Endothelial cell of umbilical vein (primary cell): ENCODE measurements at regions of chr19 and their contacts with region 1.

Region 1: DNA sequence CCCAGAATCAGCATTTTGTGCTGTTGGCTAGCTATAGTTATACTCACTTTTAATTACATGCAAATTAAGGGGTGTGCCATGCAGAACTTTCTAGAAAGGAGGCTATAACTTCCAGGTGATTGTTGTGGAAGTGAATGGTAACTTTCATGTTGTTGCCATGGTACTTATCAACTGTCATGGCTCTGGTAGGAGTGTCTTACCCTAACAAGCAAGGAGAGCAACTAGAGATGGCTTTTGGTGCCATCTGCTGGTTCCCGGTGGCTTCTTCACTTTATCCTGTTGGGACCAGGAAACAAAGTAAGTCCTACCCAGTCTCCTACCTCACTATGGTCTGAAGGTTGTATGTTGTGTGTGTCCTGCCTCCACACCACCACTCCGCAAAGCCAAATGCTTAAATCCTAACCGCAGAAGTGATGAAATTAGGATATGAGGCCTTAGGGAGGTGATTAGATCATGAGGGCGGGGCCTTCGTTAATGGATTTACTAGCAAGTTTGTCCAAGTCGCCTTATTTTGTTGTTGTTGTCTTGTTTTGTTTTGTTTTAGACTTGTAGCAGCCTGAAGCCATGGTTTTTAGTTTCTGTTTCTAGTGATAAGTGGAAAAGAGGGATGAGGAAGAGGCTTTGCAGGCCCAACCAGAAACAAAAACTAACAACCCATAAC is 22.6 kb downstream of the FBXL12 start:
- DNase-seq: peak; percentile 94
- H3K4me3 ChIP-seq: no peak overlapping the region
- H3K27ac ChIP-seq: no peak overlapping the region
- H3K4me1 ChIP-seq: no peaks in the 10 kb centered on the region
- H3K27me3 ChIP-seq: no peaks in the 10 kb centered on the region
- CTCF ChIP-seq: peak; percentile 79 to 83
- POLR2A ChIP-seq: no peak

Region 2: DNA sequence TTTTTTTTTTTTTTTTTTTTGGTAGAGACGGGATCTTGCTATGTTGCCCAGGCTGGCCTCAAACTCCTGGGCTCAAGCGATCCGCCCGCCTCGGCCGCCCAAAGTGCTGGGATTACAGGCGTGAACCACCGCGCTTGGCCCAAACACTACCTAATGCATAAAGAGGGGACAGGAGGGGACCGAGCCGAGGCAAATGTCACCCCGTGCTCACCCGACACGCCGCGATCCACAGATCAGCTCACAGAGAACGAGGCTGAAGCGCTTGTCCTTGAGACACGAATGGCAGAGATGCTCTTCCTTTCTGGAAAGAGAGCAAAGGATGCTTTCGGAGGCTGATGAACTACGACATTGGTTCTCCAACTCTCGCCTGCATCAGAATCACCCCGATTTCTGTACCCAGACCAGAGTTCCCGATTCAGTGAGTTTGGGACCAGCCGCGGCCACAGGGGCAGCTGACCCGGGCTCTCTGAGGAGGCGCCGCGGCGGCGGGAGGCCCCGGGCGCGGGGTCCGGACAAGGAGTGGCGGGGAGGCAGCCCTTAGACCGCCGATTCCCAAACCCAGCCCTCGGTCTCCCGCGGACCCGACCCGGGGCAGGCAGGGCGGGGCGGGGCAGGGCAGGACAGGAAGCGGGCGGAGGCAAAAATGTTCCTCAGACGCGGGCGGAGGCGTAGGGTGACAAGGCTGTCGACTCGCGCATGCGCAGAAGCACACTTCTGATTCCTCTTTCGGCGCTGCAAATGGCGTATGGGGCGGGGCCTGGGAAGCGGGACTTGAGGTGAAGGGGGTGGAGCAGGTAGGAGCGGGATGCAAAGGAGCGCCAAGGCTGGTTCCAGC is 486.9 kb before region 1 on chr19 and contains the start of gene ZNF699:
- CTCF ChIA-PET with region 1: interaction called, 9 read pairs
- POLR2A ChIA-PET with region 1: no interaction called
- dilution Hi-C with region 1: no loop called
- intact Hi-C with region 1: loop called (anchors 2 kb)
- DNase-seq: peak; percentile 98
- H3K4me3 ChIP-seq: peak within 1 kb of the TSS; percentile 52 to 88 (median 67)
- H3K27ac ChIP-seq: peak within 1 kb of the TSS; percentile 55
- H3K4me1 ChIP-seq: peaks cover 7% of the 10 kb centered on the region
- H3K27me3 ChIP-seq: no peaks in the 10 kb centered on the region
- CTCF ChIP-seq: no peak
- POLR2A ChIP-seq: no peak
- total RNA-seq, gene ZNF699: 3.9 and 4.7 TPM in 2 replicates

Region 3: GRCh38 chr19:9584073-9584833 is 212.0 kb before region 1 on chr19 and contains the start of gene ZNF121:
- CTCF ChIA-PET with region 1: interaction called, 10 read pairs
- POLR2A ChIA-PET with region 1: no interaction called
- dilution Hi-C with region 1: no loop called
- intact Hi-C with region 1: loop called (anchors 1 kb)
- DNase-seq: peak; percentile 82
- H3K4me3 ChIP-seq: peak within 1 kb of the TSS; percentile 72 to 97 (median 90)
- H3K27ac ChIP-seq: peak within 1 kb of the TSS; percentile 82
- H3K4me1 ChIP-seq: no peaks in the 10 kb centered on the region
- H3K27me3 ChIP-seq: no peaks in the 10 kb centered on the region
- CTCF ChIP-seq: no peak
- POLR2A ChIP-seq: peak; percentile 94
- total RNA-seq, gene ZNF121: 21.4 and 25.1 TPM in 2 replicates

Region 4: DNA sequence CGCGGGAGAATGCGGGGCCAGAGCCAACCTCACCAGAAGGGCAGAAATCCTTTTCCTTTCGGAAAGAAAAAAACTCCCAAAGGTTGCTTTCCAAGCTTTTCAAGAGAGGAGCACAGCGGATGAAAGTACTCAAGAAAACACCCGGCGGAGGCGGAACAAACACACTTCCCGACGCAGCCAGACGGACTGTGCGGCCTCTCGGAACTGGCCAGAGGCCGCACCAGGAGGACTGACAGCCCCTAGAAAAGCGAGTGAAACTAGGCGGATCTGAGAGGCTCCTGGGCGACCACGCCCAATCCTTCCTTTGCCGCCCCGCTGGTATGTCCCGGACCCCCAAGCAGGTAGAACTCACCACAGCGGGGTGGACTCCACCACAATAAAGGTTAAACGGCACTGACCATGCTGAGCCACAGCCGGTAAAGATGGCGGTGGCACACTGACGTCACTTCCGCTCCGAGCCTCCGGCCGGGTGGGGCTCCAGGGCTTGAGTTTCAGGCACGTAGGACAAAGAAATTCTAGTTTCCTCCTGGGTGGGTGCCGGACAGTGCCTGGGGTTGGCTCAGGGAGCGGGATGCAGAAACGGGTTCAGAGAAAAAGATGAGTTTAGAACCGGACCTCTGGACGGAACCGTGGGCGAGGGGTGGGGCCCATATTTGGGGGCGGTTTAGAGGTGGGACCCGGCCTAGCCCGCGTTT is 121.4 kb before region 1 on chr19 and contains the start of gene ZNF562:
- CTCF ChIA-PET with region 1: no interaction called
- POLR2A ChIA-PET with region 1: no interaction called
- dilution Hi-C with region 1: no loop called
- intact Hi-C with region 1: loop called (anchors 1 kb)
- DNase-seq: peak; percentile 89
- H3K4me3 ChIP-seq: peak within 1 kb of the TSS; percentile 73 to 88 (median 74)
- H3K27ac ChIP-seq: peak within 1 kb of the TSS; percentile 85
- H3K4me1 ChIP-seq: no peaks in the 10 kb centered on the region
- H3K27me3 ChIP-seq: no peaks in the 10 kb centered on the region
- CTCF ChIP-seq: no peak
- POLR2A ChIP-seq: peak; percentile 89
- total RNA-seq, gene ZNF562: 22.3 and 27.0 TPM in 2 replicates

Region 5: DNA sequence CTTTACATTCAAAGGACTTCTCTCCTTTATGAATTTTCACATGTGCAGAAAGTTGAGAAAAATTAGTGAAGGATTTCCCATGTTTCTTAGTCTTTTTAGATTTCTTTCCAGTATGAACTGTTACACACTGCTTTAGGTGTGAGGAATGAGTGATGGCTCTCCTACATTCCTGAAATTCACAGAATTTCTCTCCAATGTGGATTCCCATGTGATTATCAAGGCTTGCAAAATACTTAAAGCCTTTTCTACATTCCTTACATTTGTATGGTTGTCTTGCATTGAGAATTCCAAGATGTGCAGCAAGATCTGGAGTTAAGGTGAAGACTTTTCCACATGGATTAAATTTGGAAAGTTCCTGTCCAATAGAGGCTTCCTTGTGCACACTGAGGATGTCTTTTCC is 105.5 kb before region 1 on chr19:
- CTCF ChIA-PET with region 1: no interaction called
- POLR2A ChIA-PET with region 1: no interaction called
- dilution Hi-C with region 1: no loop called
- intact Hi-C with region 1: no loop called
- DNase-seq: no peak
- H3K4me3 ChIP-seq: no peak overlapping the region
- H3K27ac ChIP-seq: no peak overlapping the region
- H3K4me1 ChIP-seq: no peaks in the 10 kb centered on the region
- H3K27me3 ChIP-seq: no peaks in the 10 kb centered on the region
- CTCF ChIP-seq: no peak
- POLR2A ChIP-seq: no peak

Region 6: GRCh38 chr19:9721861-9722260 is 74.4 kb before region 1 on chr19:
- CTCF ChIA-PET with region 1: no interaction called
- POLR2A ChIA-PET with region 1: no interaction called
- dilution Hi-C with region 1: no loop called
- intact Hi-C with region 1: no loop called
- DNase-seq: no peak
- H3K4me3 ChIP-seq: no peak overlapping the region
- H3K27ac ChIP-seq: no peak overlapping the region
- H3K4me1 ChIP-seq: no peaks in the 10 kb centered on the region
- H3K27me3 ChIP-seq: no peaks in the 10 kb centered on the region
- CTCF ChIP-seq: no peak
- POLR2A ChIP-seq: no peak

Region 7: GRCh38 chr19:9818734-9819589 is 22.7 kb after region 1 on chr19 and contains the start of gene FBXL12:
- CTCF ChIA-PET with region 1: interaction called, 3 read pairs
- POLR2A ChIA-PET with region 1: no interaction called
- dilution Hi-C with region 1: no loop called
- intact Hi-C with region 1: loop called (anchors 1 kb)
- DNase-seq: peak; percentile 99
- H3K4me3 ChIP-seq: peak within 1 kb of the TSS; percentile 42 to 82 (median 74)
- H3K27ac ChIP-seq: peak within 1 kb of the TSS; percentile 56
- H3K4me1 ChIP-seq: peaks cover 12% of the 10 kb centered on the region
- H3K27me3 ChIP-seq: no peaks in the 10 kb centered on the region
- CTCF ChIP-seq: no peak
- POLR2A ChIP-seq: peak; percentile 86
- total RNA-seq, gene FBXL12: 25.8 and 26.9 TPM in 2 replicates

Region 8: GRCh38 chr19:9857920-9858746 is 61.9 kb after region 1 on chr19:
- CTCF ChIA-PET with region 1: no interaction called
- POLR2A ChIA-PET with region 1: no interaction called
- dilution Hi-C with region 1: no loop called
- intact Hi-C with region 1: no loop called
- DNase-seq: no peak
- H3K4me3 ChIP-seq: no peak overlapping the region
- H3K27ac ChIP-seq: no peak overlapping the region
- H3K4me1 ChIP-seq: peaks cover 5% of the 10 kb centered on the region
- H3K27me3 ChIP-seq: no peaks in the 10 kb centered on the region
- CTCF ChIP-seq: no peak
- POLR2A ChIP-seq: no peak